Heart right ventricle (tissue), 16 donors: ENCODE measurements at regions of chr1 and their contacts with region 1.

Region 1: GRCh38 chr1:198088360-198089071 is 68.3 kb upstream of the NEK7 start:
- DNase-seq: no peak
- ATAC-seq: peak in 1 of 8 donors; percentile 55
- H3K4me3 ChIP-seq: no peak overlapping the region
- H3K27ac ChIP-seq: no peak overlapping the region
- H3K4me1 ChIP-seq: peaks cover 0 to 11% (median 0%) of the 10 kb centered on the region in 9 donors
- H3K27me3 ChIP-seq: no peaks in the 10 kb centered on the region
- CTCF ChIP-seq: peak; percentile 13 to 76 (median 67)

Region 2: DNA sequence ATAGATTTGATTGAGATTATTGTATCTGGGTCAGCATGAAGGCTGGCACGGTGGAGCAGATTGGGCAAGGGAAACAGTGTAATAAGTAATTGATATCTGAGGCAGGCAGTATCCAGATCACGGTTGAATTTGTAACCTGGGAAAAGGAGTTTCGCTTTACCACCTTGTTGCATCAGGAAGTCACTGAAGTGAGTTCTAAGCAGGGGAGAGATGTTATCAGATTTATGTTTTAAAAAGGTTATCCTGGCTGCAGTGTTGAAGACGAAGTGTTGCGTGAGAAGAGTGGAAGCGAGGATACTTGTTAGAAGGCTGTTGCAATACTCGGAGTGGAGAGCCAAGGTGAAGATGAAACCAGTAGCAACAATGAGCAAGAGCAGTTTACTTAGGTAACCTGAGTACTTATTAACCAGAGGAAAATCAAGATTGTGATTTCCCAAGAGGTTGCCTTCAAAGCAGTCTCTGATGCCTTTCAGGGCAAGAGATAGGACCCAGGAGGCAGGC is 93.6 kb before region 1 on chr1:
- intact Hi-C with region 1: no loop called
- DNase-seq: no peak
- ATAC-seq: no peak
- H3K4me3 ChIP-seq: no peak overlapping the region
- H3K27ac ChIP-seq: no peak overlapping the region
- H3K4me1 ChIP-seq: no peaks in the 10 kb centered on the region
- H3K27me3 ChIP-seq: peaks cover 0 to 4% (median 0%) of the 10 kb centered on the region in 7 donors
- CTCF ChIP-seq: no peak

Region 3: DNA sequence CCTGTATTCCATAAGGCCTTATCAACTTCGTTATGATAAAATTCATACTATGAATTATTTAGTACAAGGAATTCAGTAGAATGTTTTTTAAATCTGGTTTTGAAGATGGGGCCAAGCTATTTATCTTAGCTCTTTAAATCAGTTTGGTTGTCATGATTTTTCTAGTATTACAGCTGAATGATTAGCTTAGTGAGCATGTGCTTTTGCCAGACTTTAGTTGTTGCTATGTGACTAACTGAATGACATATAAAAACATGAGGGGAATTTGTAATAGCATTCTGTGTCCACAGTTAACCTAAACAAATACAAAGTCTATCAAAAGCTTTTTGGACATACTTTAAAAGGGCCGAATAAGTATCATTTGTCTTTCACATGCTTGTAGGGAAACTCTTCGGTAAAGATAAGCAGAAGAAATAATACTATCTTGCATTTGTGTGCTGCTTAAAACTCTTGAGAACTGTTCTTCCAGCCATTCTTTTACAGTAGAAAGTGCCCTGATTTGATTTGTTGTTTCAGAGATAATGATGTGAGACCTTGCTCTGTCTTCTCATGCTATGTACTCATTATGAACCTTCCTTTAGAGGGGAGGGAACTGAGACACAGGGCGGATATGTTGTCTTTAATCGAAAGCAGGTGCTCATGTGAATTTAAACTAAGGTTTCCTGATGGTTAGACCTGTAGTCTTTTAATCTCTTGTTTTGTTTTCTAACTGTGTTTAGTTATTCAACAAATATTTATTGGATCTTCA is 87.1 kb after region 1 on chr1:
- intact Hi-C with region 1: no loop called
- DNase-seq: no peak
- ATAC-seq: peak in 1 of 8 donors; percentile 16
- H3K4me3 ChIP-seq: no peak overlapping the region
- H3K27ac ChIP-seq: no peak overlapping the region
- H3K4me1 ChIP-seq: peaks cover 3 to 100% (median 93%) of the 10 kb centered on the region in 9 donors
- H3K27me3 ChIP-seq: no peaks in the 10 kb centered on the region
- CTCF ChIP-seq: no peak

Region 4: GRCh38 chr1:198298640-198299039 is 210.1 kb after region 1 on chr1:
- intact Hi-C with region 1: loop called in 1 of 10 experiments (anchors 10 kb)
- DNase-seq: no peak
- ATAC-seq: no peak
- H3K4me3 ChIP-seq: no peak overlapping the region
- H3K27ac ChIP-seq: no peak overlapping the region
- H3K4me1 ChIP-seq: peaks cover 0 to 15% (median 0%) of the 10 kb centered on the region in 9 donors
- H3K27me3 ChIP-seq: no peaks in the 10 kb centered on the region
- CTCF ChIP-seq: no peak